ENCODE measurements at regions of chr22 and their contacts with region 1.

Region 1: DNA sequence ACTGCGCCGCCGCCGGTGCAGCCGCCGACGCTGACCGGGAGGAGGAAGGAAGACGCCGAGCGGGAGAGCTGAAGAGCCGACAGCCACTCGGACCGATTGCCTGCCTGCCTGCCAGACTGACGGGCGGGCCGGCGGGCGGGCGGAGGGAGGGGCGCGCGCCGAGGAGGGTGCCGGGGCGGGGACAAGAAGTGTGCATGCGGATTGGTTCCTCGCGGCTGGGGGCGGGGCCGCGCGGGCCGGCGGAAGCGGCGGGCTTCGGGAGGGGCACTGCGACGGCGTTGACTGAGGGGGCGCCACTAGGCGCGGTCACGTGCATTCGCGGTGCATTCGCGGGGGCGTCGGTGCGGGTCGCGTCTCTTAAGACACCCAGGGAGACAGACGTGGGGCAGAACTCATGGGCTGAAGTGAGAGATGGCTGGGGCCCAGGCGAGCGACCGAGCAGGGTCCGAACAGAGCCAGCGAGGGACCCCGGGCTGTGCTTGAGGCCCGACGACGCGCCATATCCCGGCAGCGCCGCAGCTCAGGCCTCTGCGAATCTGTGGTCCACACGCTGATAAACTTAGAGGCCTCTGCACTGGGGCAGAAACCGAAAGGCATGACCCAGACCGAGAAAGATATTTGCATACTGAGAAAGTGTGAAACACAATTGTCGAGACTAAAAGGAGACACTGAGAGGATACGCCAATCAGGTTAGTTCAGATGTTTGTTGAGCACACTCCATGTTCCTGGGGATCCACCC is at the start of gene MAPK1:
- DNase-seq: peak; percentile 97
- ATAC-seq: peak; percentile 93
- H3K4me3 ChIP-seq: peak within 1 kb of the TSS; percentile 70
- H3K27ac ChIP-seq: peak within 1 kb of the TSS; percentile 97
- H3K4me1 ChIP-seq: peaks cover 12% of the 10 kb centered on the region
- H3K27me3 ChIP-seq: no peaks in the 10 kb centered on the region
- CTCF ChIP-seq: peak in 2 of 3 experiments; percentile 16 to 20; a peak in 4 of 6 replicates
- EP300 ChIP-seq: peak; percentile 76 to 78; a peak in 3 of 4 replicates
- POLR2A ChIP-seq: peak; percentile 96
- RAD21 ChIP-seq: no peak
- polyA plus RNA-seq, gene MAPK1: 12.1 to 19.3 TPM

Region 2: DNA sequence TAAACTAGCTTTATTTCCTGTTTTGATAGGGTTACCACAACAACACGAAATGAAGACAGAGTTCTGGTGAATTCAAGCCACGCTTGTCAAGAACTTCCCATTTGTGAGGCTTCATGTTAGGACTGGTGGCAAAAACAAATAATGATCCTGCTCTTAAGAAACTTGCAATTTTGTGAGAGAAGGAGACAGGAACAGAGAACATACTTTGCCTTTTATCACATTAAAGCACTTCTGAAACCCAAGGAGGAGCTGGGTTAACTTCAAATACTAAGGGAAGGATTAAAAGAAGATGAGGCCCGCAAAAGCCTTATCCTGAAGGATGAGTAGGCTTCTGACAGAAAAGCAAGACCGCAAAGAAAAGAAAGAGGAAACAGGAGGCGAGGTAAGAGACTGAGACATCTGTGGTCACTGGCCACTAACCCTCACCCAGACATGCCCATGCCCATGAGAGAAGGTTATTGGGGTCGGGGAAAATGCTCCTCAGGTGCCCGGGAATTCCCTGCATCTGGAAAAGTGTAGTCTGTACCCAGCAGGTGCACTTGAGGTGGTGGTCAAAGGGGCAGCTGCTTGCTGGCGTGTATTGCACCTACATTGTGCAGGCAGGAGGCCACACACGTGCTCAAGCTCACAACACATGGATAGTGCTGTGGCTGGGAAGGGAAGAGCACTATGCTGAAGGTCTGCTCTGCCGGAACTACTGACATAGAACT is 50.8 kb before region 1 on chr22:
- CTCF ChIA-PET with region 1: no interaction called
- POLR2A ChIA-PET with region 1: no interaction called
- RAD21 ChIA-PET with region 1: no interaction called
- SMC1A ChIA-PET with region 1: no interaction called
- in situ Hi-C with region 1: no loop called
- intact Hi-C with region 1: loop called (anchors 5 kb)
- DNase-seq: peak; percentile 61
- ATAC-seq: peak; percentile 95
- H3K4me3 ChIP-seq: peak overlapping the region; percentile 29; the same call in 1 of the 2 replicates
- H3K27ac ChIP-seq: peak overlapping the region; percentile 79
- H3K4me1 ChIP-seq: peaks cover 16% of the 10 kb centered on the region
- H3K27me3 ChIP-seq: no peaks in the 10 kb centered on the region
- CTCF ChIP-seq: no peak
- EP300 ChIP-seq: peak in 1 of 2 experiments; percentile 81; a peak in 1 of 4 replicates
- POLR2A ChIP-seq: no peak
- RAD21 ChIP-seq: no peak

Region 3: GRCh38 chr22:21902296-21903087 is 34.8 kb after region 1 on chr22:
- CTCF ChIA-PET with region 1: interaction called, 3 read pairs
- POLR2A ChIA-PET with region 1: interaction called, 4 read pairs
- RAD21 ChIA-PET with region 1: interaction called, 3 read pairs
- SMC1A ChIA-PET with region 1: interaction called, 3 read pairs
- in situ Hi-C with region 1: no loop called
- intact Hi-C with region 1: loop called (anchors 2 kb)
- DNase-seq: peak; percentile 56
- ATAC-seq: peak; percentile 100
- H3K4me3 ChIP-seq: no peak overlapping the region
- H3K27ac ChIP-seq: no peak overlapping the region
- H3K4me1 ChIP-seq: peaks cover 5% of the 10 kb centered on the region; the same call in 1 of the 2 replicates
- H3K27me3 ChIP-seq: no peaks in the 10 kb centered on the region; a peak in 2 of 4 replicates
- CTCF ChIP-seq: peak in 2 of 3 experiments; percentile 5 to 8; a peak in 2 of 6 replicates
- EP300 ChIP-seq: no peak
- POLR2A ChIP-seq: no peak
- RAD21 ChIP-seq: peak; percentile 12; the same call in 1 of the 2 replicates

Region 4: GRCh38 chr22:22074634-22075381 is 207.1 kb after region 1 on chr22:
- CTCF ChIA-PET with region 1: no interaction called
- POLR2A ChIA-PET with region 1: no interaction called
- RAD21 ChIA-PET with region 1: no interaction called
- SMC1A ChIA-PET with region 1: no interaction called
- in situ Hi-C with region 1: no loop called
- intact Hi-C with region 1: no loop called
- DNase-seq: no peak
- ATAC-seq: no peak
- H3K4me3 ChIP-seq: no peak overlapping the region
- H3K27ac ChIP-seq: no peak overlapping the region
- H3K4me1 ChIP-seq: peaks cover 11% of the 10 kb centered on the region
- H3K27me3 ChIP-seq: no peaks in the 10 kb centered on the region
- CTCF ChIP-seq: no peak
- EP300 ChIP-seq: no peak
- POLR2A ChIP-seq: no peak
- RAD21 ChIP-seq: no peak